CD4-positive, alpha-beta T cell (primary cell): ENCODE measurements at regions of chr3 and their contacts with region 1.

Region 1: GRCh38 chr3:58491506-58492402 is at the start of gene KCTD6:
- DNase-seq: peak; percentile 65 to 95 (median 82)
- ATAC-seq: peak; percentile 85
- H3K4me3 ChIP-seq: peak within 1 kb of the TSS; percentile 81
- H3K4me3 Mint-ChIP-seq: peak within 1 kb of the TSS; percentile 97
- H3K27ac ChIP-seq: peak within 1 kb of the TSS; percentile 16 to 30
- H3K27ac Mint-ChIP-seq: peak within 1 kb of the TSS; percentile 83
- H3K4me1 ChIP-seq: peaks cover 22% of the 10 kb centered on the region
- H3K4me1 Mint-ChIP-seq: peaks cover 65% of the 10 kb centered on the region
- H3K27me3 ChIP-seq: no peaks in the 10 kb centered on the region
- H3K27me3 Mint-ChIP-seq: no peaks in the 10 kb centered on the region
- CTCF ChIP-seq: peak; percentile 55
- total RNA-seq, gene KCTD6: 3.8 to 5.0 TPM

Region 2: DNA sequence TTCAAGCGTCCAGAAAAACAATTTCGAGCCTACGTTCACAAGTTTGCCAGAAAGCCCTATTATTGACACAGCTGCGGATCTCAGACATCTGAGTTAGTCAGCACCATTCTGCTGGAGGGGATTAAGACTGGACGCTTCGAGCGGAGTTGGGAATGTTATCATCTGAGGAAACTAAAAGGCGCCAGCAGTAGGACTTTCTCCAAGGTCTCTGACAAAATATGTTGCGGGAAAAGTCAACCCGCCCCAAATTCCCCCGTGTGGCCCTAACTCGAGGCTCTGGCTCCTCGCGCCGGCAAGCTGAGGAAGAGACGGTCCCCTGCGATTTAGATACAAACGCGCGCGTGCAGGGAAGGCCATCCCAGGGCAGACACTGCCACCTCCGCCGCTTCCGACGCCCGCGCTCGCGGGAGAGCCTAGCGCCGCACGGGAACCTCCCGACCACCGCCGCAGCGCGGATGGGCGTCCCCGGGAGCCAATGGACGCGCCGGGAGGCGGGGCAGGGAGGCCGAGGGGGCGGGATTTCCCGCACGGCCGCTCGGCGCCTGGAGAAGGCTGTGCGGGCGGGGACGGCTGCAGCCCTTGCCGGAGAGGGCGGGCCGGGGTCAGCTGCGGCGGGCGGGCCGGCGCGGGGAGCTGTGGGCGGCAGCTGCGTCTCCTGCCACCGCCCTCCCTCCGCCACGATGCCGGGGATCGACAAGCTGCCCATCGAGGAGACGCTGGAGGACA is 1264.4 kb before region 1 on chr3 and contains the start of gene APPL1:
- CTCF ChIA-PET with region 1: no interaction called
- POLR2A ChIA-PET with region 1: no interaction called
- intact Hi-C with region 1: loop called in 1 of 2 experiments (anchors 10 kb)
- DNase-seq: peak; percentile 61 to 93 (median 84)
- ATAC-seq: peak; percentile 88
- H3K4me3 ChIP-seq: peak within 1 kb of the TSS; percentile 80
- H3K4me3 Mint-ChIP-seq: peak within 1 kb of the TSS; percentile 95
- H3K27ac ChIP-seq: no peak within 1 kb of the TSS
- H3K27ac Mint-ChIP-seq: peak within 1 kb of the TSS; percentile 82
- H3K4me1 ChIP-seq: peaks cover 10% of the 10 kb centered on the region
- H3K4me1 Mint-ChIP-seq: peaks cover 33% of the 10 kb centered on the region
- H3K27me3 ChIP-seq: no peaks in the 10 kb centered on the region
- H3K27me3 Mint-ChIP-seq: no peaks in the 10 kb centered on the region
- CTCF ChIP-seq: no peak
- total RNA-seq, gene APPL1: 21.3 to 22.9 TPM

Region 3: DNA sequence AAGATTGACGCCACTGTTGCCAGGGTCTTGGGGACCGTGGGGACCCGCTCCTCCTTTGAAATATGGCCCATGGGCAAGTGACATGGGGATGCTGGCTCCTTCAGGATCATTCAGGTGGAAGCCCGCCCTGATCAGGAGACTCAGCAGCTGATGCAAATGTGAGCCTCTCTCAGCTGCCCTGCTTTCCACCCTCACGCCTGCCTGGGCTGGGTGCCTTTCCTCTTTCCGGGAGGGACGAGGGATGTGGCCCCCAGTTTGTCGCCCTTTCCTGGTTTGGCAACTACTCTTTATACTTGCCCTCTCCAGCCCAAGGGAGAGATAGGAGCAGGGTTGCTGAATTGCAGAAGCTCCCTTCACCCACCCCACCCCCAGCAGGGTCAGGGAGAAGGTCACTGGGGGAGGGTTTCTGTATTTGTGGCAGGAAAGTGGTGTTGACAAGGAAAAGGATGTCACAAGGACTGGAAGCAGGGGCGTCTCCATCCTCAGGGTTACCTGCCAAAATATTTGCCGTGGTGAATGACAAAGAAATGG is 302.8 kb before region 1 on chr3:
- CTCF ChIA-PET with region 1: no interaction called
- POLR2A ChIA-PET with region 1: no interaction called
- intact Hi-C with region 1: no loop called
- DNase-seq: no peak
- ATAC-seq: no peak
- H3K4me3 ChIP-seq: no peak overlapping the region
- H3K4me3 Mint-ChIP-seq: no peak overlapping the region
- H3K27ac ChIP-seq: no peak overlapping the region
- H3K27ac Mint-ChIP-seq: no peak overlapping the region
- H3K4me1 ChIP-seq: peaks cover 5% of the 10 kb centered on the region
- H3K4me1 Mint-ChIP-seq: no peaks in the 10 kb centered on the region
- H3K27me3 ChIP-seq: no peaks in the 10 kb centered on the region
- H3K27me3 Mint-ChIP-seq: no peaks in the 10 kb centered on the region
- CTCF ChIP-seq: no peak

Region 4: GRCh38 chr3:58332575-58333188 is 159.1 kb before region 1 on chr3 and contains the start of gene PXK:
- CTCF ChIA-PET with region 1: interaction called, 24 read pairs
- POLR2A ChIA-PET with region 1: interaction called, 28 read pairs
- intact Hi-C with region 1: loop called (anchors 1 kb)
- DNase-seq: peak; percentile 55 to 88 (median 72)
- ATAC-seq: peak; percentile 90
- H3K4me3 ChIP-seq: peak within 1 kb of the TSS; percentile 61
- H3K4me3 Mint-ChIP-seq: peak within 1 kb of the TSS; percentile 99
- H3K27ac ChIP-seq: no peak within 1 kb of the TSS
- H3K27ac Mint-ChIP-seq: peak within 1 kb of the TSS; percentile 73
- H3K4me1 ChIP-seq: peaks cover 23% of the 10 kb centered on the region
- H3K4me1 Mint-ChIP-seq: peaks cover 39% of the 10 kb centered on the region
- H3K27me3 ChIP-seq: no peaks in the 10 kb centered on the region
- H3K27me3 Mint-ChIP-seq: no peaks in the 10 kb centered on the region
- CTCF ChIP-seq: no peak
- total RNA-seq, gene PXK: 12.5 to 14.8 TPM

Region 5: DNA sequence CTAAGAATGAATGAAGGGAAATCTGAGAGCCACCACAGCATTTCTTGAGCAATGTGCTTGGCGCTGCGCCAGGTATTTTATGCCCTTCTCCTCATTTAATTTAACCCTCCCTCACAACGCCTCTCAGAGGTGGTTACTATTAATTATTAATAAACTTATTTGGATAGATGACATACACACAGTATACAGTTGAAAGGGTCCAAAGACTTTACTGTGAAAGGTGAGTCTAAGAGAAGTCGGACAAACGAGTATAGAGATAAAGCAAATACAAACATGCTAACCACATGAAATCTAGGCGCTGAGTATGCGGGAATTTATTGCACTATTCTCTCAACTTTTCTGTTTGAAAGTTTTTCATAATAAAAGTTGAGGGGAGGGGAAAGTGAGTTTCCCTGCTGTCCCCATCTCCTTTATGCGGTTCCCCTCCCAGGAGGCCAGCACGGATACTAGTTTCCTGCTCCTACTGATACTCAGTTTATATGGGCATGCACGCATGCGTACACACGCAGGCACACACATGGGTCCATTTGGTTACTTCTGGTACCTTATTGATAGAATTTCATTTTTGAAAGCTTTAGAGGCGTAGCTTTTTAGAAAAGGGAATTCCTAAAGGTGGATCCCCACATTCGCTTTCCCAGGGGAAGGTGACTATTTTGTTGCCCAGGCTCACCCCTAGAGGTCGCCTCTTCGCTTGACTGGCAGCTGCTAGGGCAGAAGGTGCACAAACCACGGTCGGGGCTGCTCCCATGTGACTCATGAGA is 28.4 kb before region 1 on chr3:
- CTCF ChIA-PET with region 1: interaction called, 13 read pairs
- POLR2A ChIA-PET with region 1: no interaction called
- intact Hi-C with region 1: loop called in 1 of 2 experiments (anchors 2 kb)
- DNase-seq: peak; percentile 24 to 82 (median 62)
- ATAC-seq: peak; percentile 88
- H3K4me3 ChIP-seq: peak overlapping the region; percentile 1
- H3K4me3 Mint-ChIP-seq: peak overlapping the region; percentile 5
- H3K27ac ChIP-seq: no peak overlapping the region
- H3K27ac Mint-ChIP-seq: no peak overlapping the region
- H3K4me1 ChIP-seq: peaks cover 7% of the 10 kb centered on the region
- H3K4me1 Mint-ChIP-seq: peaks cover 8% of the 10 kb centered on the region
- H3K27me3 ChIP-seq: no peaks in the 10 kb centered on the region
- H3K27me3 Mint-ChIP-seq: no peaks in the 10 kb centered on the region
- CTCF ChIP-seq: peak; percentile 88

Region 6: GRCh38 chr3:58532794-58533220 is 41.1 kb after region 1 on chr3:
- CTCF ChIA-PET with region 1: interaction called, 7 read pairs
- POLR2A ChIA-PET with region 1: no interaction called
- intact Hi-C with region 1: loop called (anchors 1 kb)
- DNase-seq: peak; percentile 60 to 90 (median 70)
- ATAC-seq: peak; percentile 99
- H3K4me3 ChIP-seq: no peak overlapping the region
- H3K4me3 Mint-ChIP-seq: no peak overlapping the region
- H3K27ac ChIP-seq: no peak overlapping the region
- H3K27ac Mint-ChIP-seq: no peak overlapping the region
- H3K4me1 ChIP-seq: peaks cover 8% of the 10 kb centered on the region
- H3K4me1 Mint-ChIP-seq: peaks cover 7% of the 10 kb centered on the region
- H3K27me3 ChIP-seq: no peaks in the 10 kb centered on the region
- H3K27me3 Mint-ChIP-seq: no peaks in the 10 kb centered on the region
- CTCF ChIP-seq: peak; percentile 78